ENCODE measurements at regions of chr22 and their contacts with region 1.

Region 1: GRCh38 chr22:22720201-22720723 is 75.8 kb downstream of the GGTLC2 start:
- DNase-seq: peak; percentile 72
- CTCF ChIP-seq: peak; percentile 71

Region 2: DNA sequence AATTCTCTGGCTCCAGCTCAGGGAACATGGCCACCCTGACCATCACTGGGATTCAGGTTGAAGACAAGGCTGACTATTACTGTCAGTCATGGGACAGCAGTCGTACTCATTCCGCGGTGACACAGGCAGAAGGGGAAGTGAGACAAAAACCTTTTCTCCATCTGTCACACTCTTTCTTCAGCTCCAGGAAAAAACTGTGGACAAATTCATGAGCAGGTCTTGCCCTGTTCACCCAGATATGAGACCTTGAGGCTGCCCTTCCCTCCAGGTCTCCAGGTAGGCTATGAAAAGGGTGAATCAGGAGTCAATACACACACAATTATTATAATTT is 115.2 kb before region 1 on chr22:
- CTCF ChIA-PET with region 1: no interaction called
- POLR2A ChIA-PET with region 1: no interaction called
- DNase-seq: peak; percentile 47
- CTCF ChIP-seq: no peak

Region 3: GRCh38 chr22:22616636-22617035 is 103.6 kb before region 1 on chr22:
- CTCF ChIA-PET with region 1: no interaction called
- POLR2A ChIA-PET with region 1: no interaction called
- DNase-seq: peak; percentile 55
- CTCF ChIP-seq: no peak

Region 4: GRCh38 chr22:22655452-22656290 is 64.6 kb before region 1 on chr22:
- CTCF ChIA-PET with region 1: no interaction called
- POLR2A ChIA-PET with region 1: no interaction called
- DNase-seq: no peak
- CTCF ChIP-seq: no peak

Region 5: DNA sequence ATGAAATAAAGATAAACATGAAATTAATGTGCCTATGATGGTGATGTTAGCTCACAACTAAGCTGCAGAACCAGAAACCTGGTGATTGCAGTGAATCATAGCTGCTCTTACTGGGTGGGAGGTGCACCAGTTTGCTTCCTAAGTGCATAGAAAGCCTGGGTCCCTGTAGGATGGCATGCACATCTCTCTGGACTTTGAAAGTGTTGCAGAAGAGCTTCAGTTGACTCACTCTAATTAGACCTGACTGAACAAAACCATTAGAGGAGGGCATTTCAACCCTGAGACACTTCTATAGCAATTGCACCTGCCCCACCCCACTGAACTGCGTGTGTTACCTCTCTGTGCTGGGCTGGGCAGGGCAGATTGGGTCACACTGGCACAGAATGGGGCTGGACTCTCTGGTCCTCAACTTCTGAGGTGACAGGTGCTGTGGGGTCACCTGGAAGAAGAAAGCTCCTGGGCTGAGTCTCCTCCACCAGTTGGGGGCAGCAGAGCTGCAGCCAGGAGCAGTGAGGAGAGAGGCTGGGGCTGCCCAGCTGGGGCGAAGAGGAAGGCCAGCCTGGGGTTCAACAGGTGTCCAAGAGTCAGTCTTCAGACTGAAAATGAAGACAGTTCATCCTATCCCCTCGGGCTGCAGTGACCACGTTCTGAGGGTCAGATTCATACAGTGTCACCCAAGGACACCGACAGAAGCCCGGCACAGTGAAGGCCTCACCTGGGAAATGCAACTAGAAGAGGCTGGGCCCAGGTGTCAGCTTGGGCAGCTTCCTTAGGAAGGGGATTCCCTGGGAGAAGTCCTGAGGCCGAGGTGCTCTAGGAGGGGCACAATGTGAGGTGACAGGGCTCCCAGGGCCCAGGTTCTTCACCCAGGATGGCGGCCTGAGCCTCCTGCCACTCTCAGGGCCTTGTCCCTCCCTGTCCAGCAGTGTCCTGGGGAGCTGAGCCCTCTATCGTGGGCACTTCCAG is 17.7 kb before region 1 on chr22:
- CTCF ChIA-PET with region 1: interaction called, 50 read pairs
- POLR2A ChIA-PET with region 1: no interaction called
- DNase-seq: no peak
- CTCF ChIP-seq: peak; percentile 72

Region 6: GRCh38 chr22:22737590-22737989 is 17.3 kb after region 1 on chr22:
- CTCF ChIA-PET with region 1: interaction called, 137 read pairs
- POLR2A ChIA-PET with region 1: no interaction called
- DNase-seq: no peak
- CTCF ChIP-seq: no peak

Region 7: DNA sequence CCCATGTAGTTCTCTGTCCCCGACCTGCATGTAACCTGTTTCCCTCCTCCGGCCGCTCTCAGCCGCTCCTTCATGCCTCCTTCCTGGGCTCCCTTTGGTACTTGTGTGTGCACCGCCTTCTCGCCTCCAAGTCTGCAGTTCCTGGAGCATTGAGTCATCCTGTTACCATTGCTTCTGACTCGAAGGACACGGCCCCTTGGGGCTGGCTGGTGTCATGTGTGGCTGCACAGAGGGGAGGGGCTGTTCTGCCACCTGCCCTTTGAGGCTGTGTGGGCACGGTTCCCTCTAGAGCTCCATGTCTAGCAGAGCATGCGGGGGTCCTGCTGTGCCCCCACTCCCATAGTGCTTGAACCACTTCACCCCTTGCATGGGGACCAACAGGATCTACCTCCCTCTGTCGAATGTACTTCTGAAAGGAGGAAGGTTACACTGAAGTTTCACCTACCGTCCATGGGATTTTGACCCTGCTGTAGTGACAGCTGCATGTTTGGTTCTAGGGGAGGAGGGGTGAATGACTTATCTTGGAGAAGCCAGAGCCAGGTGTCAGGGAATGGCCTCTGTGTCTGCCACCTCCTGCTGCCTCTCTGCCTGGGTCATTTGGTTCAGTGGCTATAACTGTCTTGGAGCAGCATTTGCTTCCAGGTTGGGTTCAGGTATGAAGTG is 499.7 kb after region 1 on chr22:
- CTCF ChIA-PET with region 1: no interaction called
- POLR2A ChIA-PET with region 1: no interaction called
- DNase-seq: peak; percentile 70
- CTCF ChIP-seq: no peak

Measured in GM10248 (cell line).